GM12878 (cell line): ENCODE measurements at regions of chr1 and their contacts with region 1.

Region 1: DNA sequence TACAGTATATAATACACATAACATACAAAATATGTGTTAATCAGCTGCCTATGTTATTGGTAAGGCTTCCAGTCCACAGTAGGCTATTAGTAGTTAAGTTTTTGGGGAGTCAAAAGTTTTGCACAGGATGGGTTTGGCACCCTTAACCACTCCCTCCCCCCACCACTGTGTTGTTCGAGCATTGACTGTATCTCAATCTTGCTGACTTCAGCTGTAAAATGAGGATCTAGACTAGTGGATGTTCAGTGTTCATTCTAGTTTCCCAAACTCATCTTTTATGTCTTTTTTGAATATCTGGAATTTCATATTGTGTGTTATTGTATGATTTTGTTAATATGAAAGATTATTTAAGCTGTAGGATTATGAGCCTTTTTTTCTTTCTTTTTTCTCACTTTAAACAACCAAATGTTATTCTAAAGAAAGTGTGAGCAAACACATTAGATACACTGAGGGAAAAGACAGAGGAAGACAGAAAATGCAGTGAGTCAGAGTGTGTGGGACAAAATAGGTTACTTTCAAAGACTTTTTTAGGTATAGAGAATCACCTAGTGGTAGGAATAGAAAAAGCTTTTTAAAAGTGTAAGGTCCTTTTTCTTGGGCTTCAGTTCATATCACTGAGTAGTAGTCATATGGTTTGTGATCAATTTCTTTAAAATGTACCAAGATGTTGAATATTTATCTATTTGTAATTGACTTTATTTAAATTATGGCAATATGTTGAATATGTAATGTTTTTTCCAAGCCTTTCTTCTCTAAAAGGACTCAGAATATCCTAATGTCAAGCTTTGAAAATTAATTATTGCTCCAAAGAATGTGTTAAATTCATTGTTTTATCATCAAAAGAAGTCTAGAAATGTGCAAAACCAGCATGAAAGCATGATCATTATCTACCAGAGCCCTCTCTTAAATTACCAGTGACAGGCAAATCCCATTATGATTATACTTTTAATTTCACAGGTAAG is 17.9 kb upstream of the CENPF start:
- DNase-seq: no peak
- ATAC-seq: peak; percentile 90
- H3K4me3 ChIP-seq: no peak overlapping the region
- H3K27ac ChIP-seq: no peak overlapping the region
- H3K4me1 ChIP-seq: no peaks in the 10 kb centered on the region
- H3K27me3 ChIP-seq: no peaks in the 10 kb centered on the region
- CTCF ChIP-seq: peak; percentile 40 to 72 (median 69); a peak in 5 of 6 replicates
- EP300 ChIP-seq: no peak
- POLR2A ChIP-seq: no peak
- RAD21 ChIP-seq: peak; percentile 73

Region 2: GRCh38 chr1:214107322-214108096 is 477.6 kb before region 1 on chr1:
- CTCF ChIA-PET with region 1: no interaction called
- POLR2A ChIA-PET with region 1: no interaction called
- RAD21 ChIA-PET with region 1: no interaction called
- SMC1A ChIA-PET with region 1: no interaction called
- in situ Hi-C with region 1: no loop called
- intact Hi-C with region 1: no loop called
- DNase-seq: no peak
- ATAC-seq: no peak
- H3K4me3 ChIP-seq: no peak overlapping the region
- H3K27ac ChIP-seq: no peak overlapping the region
- H3K4me1 ChIP-seq: no peaks in the 10 kb centered on the region
- H3K27me3 ChIP-seq: no peaks in the 10 kb centered on the region
- CTCF ChIP-seq: no peak
- EP300 ChIP-seq: no peak
- POLR2A ChIP-seq: no peak
- RAD21 ChIP-seq: no peak

Region 3: GRCh38 chr1:214213136-214213535 is 371.9 kb before region 1 on chr1:
- CTCF ChIA-PET with region 1: interaction called, 6 read pairs
- POLR2A ChIA-PET with region 1: no interaction called
- RAD21 ChIA-PET with region 1: interaction called, 5 read pairs
- SMC1A ChIA-PET with region 1: interaction called, 6 read pairs
- in situ Hi-C with region 1: no loop called
- intact Hi-C with region 1: loop called (anchors 5 kb)
- DNase-seq: no peak
- ATAC-seq: no peak
- H3K4me3 ChIP-seq: no peak overlapping the region
- H3K27ac ChIP-seq: no peak overlapping the region
- H3K4me1 ChIP-seq: no peaks in the 10 kb centered on the region
- H3K27me3 ChIP-seq: no peaks in the 10 kb centered on the region; a peak in 1 of 4 replicates
- CTCF ChIP-seq: no peak
- EP300 ChIP-seq: no peak
- POLR2A ChIP-seq: no peak
- RAD21 ChIP-seq: no peak

Region 4: GRCh38 chr1:214397497-214397896 is 187.6 kb before region 1 on chr1:
- CTCF ChIA-PET with region 1: interaction called, 6 read pairs
- POLR2A ChIA-PET with region 1: no interaction called
- RAD21 ChIA-PET with region 1: interaction called, 4 read pairs
- SMC1A ChIA-PET with region 1: interaction called, 13 read pairs
- in situ Hi-C with region 1: no loop called
- intact Hi-C with region 1: no loop called
- DNase-seq: no peak
- ATAC-seq: no peak
- H3K4me3 ChIP-seq: no peak overlapping the region
- H3K27ac ChIP-seq: no peak overlapping the region
- H3K4me1 ChIP-seq: no peaks in the 10 kb centered on the region
- H3K27me3 ChIP-seq: no peaks in the 10 kb centered on the region
- CTCF ChIP-seq: no peak
- EP300 ChIP-seq: no peak
- POLR2A ChIP-seq: no peak
- RAD21 ChIP-seq: no peak

Region 5: DNA sequence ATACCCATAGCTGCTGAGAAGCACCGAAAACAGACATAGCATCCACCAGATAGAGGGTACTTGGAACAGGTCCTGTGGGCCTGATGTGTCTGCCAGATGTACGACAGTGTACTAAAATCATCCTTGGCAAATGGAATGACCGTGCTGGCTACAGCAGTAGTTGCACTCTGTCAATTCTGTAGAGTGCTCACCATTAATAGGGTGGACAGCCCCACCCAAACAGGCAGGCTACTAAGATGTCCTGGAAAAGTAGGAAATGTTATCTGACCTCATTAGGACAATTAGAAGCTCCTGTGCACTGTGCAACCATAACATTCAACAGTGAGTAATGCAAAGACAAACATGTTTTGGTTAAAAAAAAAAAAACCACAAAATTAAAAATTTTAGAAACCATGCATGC is 139.9 kb before region 1 on chr1:
- CTCF ChIA-PET with region 1: interaction called, 3 read pairs
- POLR2A ChIA-PET with region 1: no interaction called
- RAD21 ChIA-PET with region 1: interaction called, 21 read pairs
- SMC1A ChIA-PET with region 1: interaction called, 11 read pairs
- in situ Hi-C with region 1: no loop called
- intact Hi-C with region 1: no loop called
- DNase-seq: no peak
- ATAC-seq: peak; percentile 5; the same call in 2 of the 3 replicates
- H3K4me3 ChIP-seq: no peak overlapping the region
- H3K27ac ChIP-seq: no peak overlapping the region
- H3K4me1 ChIP-seq: no peaks in the 10 kb centered on the region; the same call in 1 of the 2 replicates
- H3K27me3 ChIP-seq: no peaks in the 10 kb centered on the region
- CTCF ChIP-seq: no peak
- EP300 ChIP-seq: no peak
- POLR2A ChIP-seq: no peak
- RAD21 ChIP-seq: no peak

Region 6: DNA sequence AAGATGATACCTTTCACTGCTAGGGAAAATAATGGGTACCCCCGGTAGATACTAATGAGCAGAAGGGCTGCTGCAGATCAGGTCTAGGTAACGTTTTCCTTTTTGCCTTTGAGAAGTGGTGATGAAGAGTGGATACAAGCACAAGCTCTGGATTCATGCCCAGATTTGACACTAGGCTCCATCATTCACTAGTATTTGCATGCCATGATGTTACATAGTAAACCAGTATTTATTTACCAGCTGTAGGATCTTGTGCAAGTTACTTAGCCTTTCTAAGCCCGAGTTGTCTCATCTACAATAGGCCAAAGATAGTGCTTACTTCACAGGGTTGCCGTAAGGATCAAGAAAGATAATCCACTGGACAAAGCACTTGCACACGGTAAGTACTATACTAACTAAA is 47.9 kb before region 1 on chr1:
- CTCF ChIA-PET with region 1: interaction called, 11 read pairs
- POLR2A ChIA-PET with region 1: no interaction called
- RAD21 ChIA-PET with region 1: interaction called, 19 read pairs
- SMC1A ChIA-PET with region 1: interaction called, 21 read pairs
- in situ Hi-C with region 1: no loop called
- intact Hi-C with region 1: no loop called
- DNase-seq: no peak
- ATAC-seq: peak; percentile 18; the same call in 2 of the 3 replicates
- H3K4me3 ChIP-seq: no peak overlapping the region
- H3K27ac ChIP-seq: no peak overlapping the region
- H3K4me1 ChIP-seq: no peaks in the 10 kb centered on the region
- H3K27me3 ChIP-seq: no peaks in the 10 kb centered on the region; a peak in 1 of 4 replicates
- CTCF ChIP-seq: no peak
- EP300 ChIP-seq: no peak
- POLR2A ChIP-seq: no peak
- RAD21 ChIP-seq: no peak

Region 7: GRCh38 chr1:214573386-214574358 is 11.4 kb before region 1 on chr1:
- CTCF ChIA-PET with region 1: interaction called, 17 read pairs
- POLR2A ChIA-PET with region 1: interaction called, 4 read pairs
- RAD21 ChIA-PET with region 1: interaction called, 14 read pairs
- SMC1A ChIA-PET with region 1: interaction called, 61 read pairs
- in situ Hi-C with region 1: no loop called
- intact Hi-C with region 1: no loop called
- DNase-seq: no peak
- ATAC-seq: no peak
- H3K4me3 ChIP-seq: no peak overlapping the region
- H3K27ac ChIP-seq: no peak overlapping the region
- H3K4me1 ChIP-seq: no peaks in the 10 kb centered on the region
- H3K27me3 ChIP-seq: no peaks in the 10 kb centered on the region
- CTCF ChIP-seq: no peak
- EP300 ChIP-seq: no peak
- POLR2A ChIP-seq: no peak
- RAD21 ChIP-seq: no peak

Region 8: GRCh38 chr1:214747050-214747615 is 162.0 kb after region 1 on chr1:
- CTCF ChIA-PET with region 1: no interaction called
- POLR2A ChIA-PET with region 1: no interaction called
- RAD21 ChIA-PET with region 1: no interaction called
- SMC1A ChIA-PET with region 1: no interaction called
- in situ Hi-C with region 1: no loop called
- intact Hi-C with region 1: no loop called
- DNase-seq: no peak
- ATAC-seq: no peak
- H3K4me3 ChIP-seq: no peak overlapping the region
- H3K27ac ChIP-seq: no peak overlapping the region
- H3K4me1 ChIP-seq: no peaks in the 10 kb centered on the region
- H3K27me3 ChIP-seq: no peaks in the 10 kb centered on the region
- CTCF ChIP-seq: no peak
- EP300 ChIP-seq: no peak
- POLR2A ChIP-seq: no peak
- RAD21 ChIP-seq: no peak